ENCODE measurements at regions of chr16 and their contacts with region 1.

Region 1: DNA sequence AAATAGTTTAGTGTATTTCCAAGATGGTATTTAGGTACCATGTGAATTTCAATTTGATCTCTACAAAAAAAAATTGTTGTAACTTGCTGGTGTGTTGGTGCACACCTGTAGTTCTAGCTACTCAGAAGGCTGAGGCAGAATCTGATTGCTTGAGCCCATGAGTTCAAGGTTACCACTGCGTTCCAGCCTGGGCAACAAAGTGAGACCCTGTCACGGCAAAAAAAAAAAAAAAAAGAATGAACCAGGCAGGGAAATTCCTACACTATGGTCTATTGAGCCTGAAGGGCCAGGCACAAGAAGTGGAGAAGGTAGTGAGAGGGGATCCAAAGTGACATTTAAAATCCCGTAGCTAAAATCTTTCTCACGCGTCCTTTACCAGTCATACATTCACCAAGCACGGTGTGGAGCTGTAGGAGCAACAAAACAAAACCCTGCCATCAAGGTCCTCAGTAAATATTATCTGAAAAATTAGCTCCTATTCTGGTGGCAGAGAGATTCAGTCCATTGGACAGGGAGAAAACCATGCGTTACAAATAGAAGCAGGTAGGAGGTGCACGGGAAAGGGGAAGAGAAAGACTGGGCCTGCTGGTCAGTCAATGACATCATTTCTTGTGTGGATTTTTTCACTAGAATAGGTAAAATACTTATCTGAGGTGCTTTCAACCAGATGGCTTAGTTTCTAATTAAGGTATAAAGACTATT is 27.3 kb downstream of the TXNDC11 start:
- DNase-seq: peak; percentile 60
- CTCF ChIP-seq: no peak

Region 2: GRCh38 chr16:11312718-11313492 is 402.5 kb before region 1 on chr16:
- CTCF ChIA-PET with region 1: no interaction called
- POLR2A ChIA-PET with region 1: no interaction called
- DNase-seq: no peak
- CTCF ChIP-seq: no peak

Region 3: GRCh38 chr16:11396241-11397048 is 319.0 kb before region 1 on chr16:
- CTCF ChIA-PET with region 1: interaction called, 12 read pairs
- POLR2A ChIA-PET with region 1: no interaction called
- DNase-seq: peak; percentile 89
- CTCF ChIP-seq: peak; percentile 97

Region 4: DNA sequence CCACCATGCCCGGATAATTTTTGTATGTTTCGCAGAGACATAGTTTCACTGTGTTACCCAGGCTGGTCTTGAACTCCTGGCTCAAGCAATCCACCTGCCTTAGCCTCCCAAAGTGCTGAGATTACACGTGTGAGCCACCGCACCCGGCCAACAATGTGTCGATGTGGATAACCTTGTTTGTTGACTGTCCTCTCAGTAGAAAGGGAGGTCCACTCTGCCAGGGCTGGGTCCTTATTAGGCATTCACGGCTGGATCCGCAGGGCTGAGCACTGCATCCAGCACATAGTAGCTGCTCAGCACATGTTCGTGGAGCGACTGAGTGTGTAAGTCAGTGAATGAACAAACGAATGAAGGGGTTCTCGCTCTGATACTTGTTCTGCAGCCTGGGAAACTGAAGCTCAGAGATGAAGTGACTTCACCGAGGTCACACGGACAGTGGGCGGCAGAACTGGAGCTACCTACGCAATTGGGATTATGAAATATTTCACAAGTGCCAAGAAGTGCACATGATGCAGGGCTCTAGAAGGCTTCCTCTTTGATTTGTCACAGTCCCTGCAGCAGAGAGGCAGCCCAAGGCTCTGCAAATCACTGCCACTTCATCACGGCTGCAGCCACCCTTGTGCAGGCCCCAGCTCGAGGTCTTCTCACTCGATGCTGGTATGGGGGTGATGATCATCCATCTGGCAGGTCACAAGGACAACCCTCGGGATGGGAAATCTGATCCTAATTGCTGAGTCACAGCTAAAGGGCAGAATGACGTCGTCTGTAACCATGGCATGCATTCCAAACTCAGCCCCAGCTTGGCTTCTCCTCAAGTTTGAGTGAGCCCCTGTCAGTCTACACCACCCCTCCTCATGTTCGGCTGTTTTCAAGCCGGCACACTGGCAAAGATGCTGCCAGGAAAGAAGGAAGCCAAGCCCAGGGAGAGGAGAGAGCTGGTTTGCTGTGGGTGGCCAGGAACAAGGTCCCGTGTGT is 75.2 kb before region 1 on chr16:
- CTCF ChIA-PET with region 1: interaction called, 13 read pairs
- POLR2A ChIA-PET with region 1: no interaction called
- DNase-seq: no peak
- CTCF ChIP-seq: no peak

Region 5: DNA sequence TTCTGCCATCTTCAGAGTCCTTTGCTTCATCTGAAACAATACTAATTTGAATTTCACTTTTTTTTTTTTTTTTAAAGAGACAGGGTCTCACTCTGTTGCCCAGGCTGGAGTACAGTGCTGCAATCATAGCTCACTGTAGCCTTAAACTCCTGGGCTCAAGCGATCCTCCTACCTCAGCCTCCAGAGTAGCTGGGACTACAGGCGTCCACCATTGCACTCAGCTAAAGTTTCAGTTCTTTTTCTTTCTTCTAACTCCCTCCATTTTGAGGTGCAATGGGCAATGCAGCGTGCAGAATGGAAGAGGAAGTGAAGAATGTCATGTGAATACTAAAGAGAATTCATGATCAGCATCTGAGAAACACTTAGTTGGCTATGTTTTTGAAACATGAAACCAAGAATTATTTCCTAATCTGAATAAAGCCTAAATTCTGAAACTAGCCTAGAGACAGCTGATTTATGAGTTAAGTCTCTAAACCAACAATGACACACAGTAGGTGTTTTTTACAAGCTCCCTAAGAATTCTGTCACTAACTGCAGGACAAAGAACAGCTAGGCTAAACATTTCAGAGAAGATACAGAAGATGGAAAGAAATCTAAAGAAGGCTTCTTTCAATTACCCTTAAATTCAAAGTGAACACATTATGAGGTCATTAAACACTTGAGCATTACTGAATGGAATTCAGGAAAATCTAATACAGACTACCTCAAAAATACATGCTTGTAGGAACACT is 26.2 kb before region 1 on chr16:
- CTCF ChIA-PET with region 1: interaction called, 17 read pairs
- POLR2A ChIA-PET with region 1: interaction called, 5 read pairs
- DNase-seq: peak; percentile 70
- CTCF ChIP-seq: no peak

Region 6: DNA sequence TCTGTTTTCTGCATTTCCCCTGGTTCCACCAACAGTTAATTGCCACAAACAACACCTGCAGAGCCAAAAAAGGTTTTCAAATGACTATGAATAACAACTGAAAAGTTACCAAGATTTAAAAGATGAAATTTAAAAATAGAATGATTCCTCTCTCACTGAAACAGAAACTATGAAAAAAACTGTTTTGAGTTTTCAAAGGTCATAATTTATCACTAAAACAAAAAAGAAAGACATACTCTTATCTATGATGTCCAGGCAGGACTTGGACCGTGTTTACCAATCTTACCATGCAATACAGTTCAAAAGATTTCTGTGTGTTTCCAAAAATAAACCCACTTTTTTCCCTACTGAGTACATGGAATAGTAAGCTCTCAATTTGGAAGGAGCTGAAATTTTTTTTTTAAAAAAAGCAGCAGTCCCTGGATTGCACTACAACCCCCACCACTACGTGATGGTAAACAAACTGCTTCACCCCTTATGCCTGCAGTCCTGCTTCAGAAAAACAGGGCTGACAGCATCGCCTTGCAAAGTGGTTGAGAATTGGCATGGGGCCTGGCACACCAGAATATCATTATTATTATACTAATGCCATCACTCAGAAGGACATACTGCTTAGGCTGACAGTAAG is 18.7 kb after region 1 on chr16:
- CTCF ChIA-PET with region 1: interaction called, 11 read pairs
- POLR2A ChIA-PET with region 1: no interaction called
- DNase-seq: peak; percentile 51
- CTCF ChIP-seq: no peak

Region 7: GRCh38 chr16:11871193-11871592 is 155.8 kb after region 1 on chr16:
- CTCF ChIA-PET with region 1: no interaction called
- POLR2A ChIA-PET with region 1: no interaction called
- DNase-seq: no peak
- CTCF ChIP-seq: peak; percentile 4

Measured in GM10248 (cell line).